ENCODE measurements at regions of chr5 and their contacts with region 1.

Region 1: GRCh38 chr5:122392824-122393223 is 80.8 kb downstream of the SNCAIP start:
- DNase-seq: no peak
- H3K4me3 ChIP-seq: no peak overlapping the region
- H3K27ac ChIP-seq: peak overlapping the region in 1 of 4 donors; percentile 60
- H3K4me1 ChIP-seq: peaks cover 0 to 31% (median 26%) of the 10 kb centered on the region in 4 donors
- H3K27me3 ChIP-seq: no peaks in the 10 kb centered on the region
- CTCF ChIP-seq: no peak
- EP300 ChIP-seq: no peak
- POLR2A ChIP-seq: no peak

Region 2: DNA sequence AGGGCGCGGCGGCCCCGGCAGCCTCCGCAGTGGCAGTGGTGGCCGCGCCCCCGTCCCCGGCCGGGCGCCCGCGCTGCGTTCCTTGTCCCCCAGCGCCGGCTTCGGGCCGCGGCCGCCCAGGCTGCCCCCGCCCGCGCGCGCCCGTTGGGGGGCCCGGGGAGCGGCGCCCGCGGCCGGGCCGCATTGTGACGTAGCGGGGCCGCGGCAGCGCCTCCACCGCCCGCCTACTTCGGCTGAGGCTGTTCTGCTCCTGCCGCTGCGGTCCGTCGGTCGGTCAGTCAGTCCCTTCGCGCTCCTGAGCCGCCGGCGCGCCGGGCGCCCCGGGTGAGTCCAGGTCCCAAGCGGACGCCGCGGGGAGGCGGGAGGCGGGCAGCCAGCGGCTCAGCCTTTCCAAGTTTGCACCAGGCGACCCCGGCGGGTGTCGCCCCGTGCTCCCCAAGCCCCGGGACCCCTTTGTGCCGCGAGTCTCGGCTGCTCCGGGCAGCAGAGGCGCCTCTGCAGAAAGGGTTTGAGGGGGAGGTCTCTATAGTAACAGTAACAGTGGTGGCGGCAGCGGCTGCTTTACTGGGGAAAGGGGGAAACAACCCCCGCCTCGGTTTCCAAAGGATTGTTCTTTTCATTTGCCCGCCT is 80.7 kb before region 1 on chr5 and contains the start of gene SNCAIP:
- intact Hi-C with region 1: loop called (anchors 5 kb)
- DNase-seq: peak; percentile 78
- H3K4me3 ChIP-seq: peak within 1 kb of the TSS; percentile 47 to 70 (median 60)
- H3K27ac ChIP-seq: peak within 1 kb of the TSS; percentile 1 to 66 (median 60)
- H3K4me1 ChIP-seq: peaks cover 0 to 24% (median 19%) of the 10 kb centered on the region in 4 donors
- H3K27me3 ChIP-seq: peaks cover 0 to 39% (median 4%) of the 10 kb centered on the region in 3 donors
- CTCF ChIP-seq: no peak
- EP300 ChIP-seq: no peak
- POLR2A ChIP-seq: no peak
- total RNA-seq, gene SNCAIP: 2.4 to 4.3 (median 3.2) TPM

Measured in sigmoid colon (tissue), 7 donors.